ENCODE measurements at regions of chr7 and their contacts with region 1.

Region 1: GRCh38 chr7:128356546-128357216 is 4.8 kb downstream of the PRRT4 start:
- DNase-seq: no peak
- H3K4me3 ChIP-seq: no peak overlapping the region
- H3K27ac ChIP-seq: no peak overlapping the region
- H3K4me1 ChIP-seq: peaks cover 3 to 21% (median 19%) of the 10 kb centered on the region in 4 experiments
- H3K27me3 ChIP-seq: peaks cover 3 to 42% (median 17%) of the 10 kb centered on the region in 5 experiments

Region 2: GRCh38 chr7:128104035-128104742 is 252.5 kb before region 1 on chr7:
- CTCF ChIA-PET with region 1: no interaction called
- POLR2A ChIA-PET with region 1: no interaction called
- DNase-seq: peak in 2 of 3 donors; percentile 54 to 65
- H3K4me3 ChIP-seq: peak overlapping the region in 6 of 7 experiments; percentile 2 to 53 (median 32)
- H3K27ac ChIP-seq: no peak overlapping the region
- H3K4me1 ChIP-seq: peaks cover 9 to 34% (median 24%) of the 10 kb centered on the region in 4 experiments
- H3K27me3 ChIP-seq: peaks cover 0 to 61% (median 17%) of the 10 kb centered on the region in 5 experiments

Region 3: GRCh38 chr7:128221929-128222403 is 134.7 kb before region 1 on chr7:
- CTCF ChIA-PET with region 1: no interaction called
- POLR2A ChIA-PET with region 1: no interaction called
- DNase-seq: peak; percentile 22 to 73 (median 67)
- H3K4me3 ChIP-seq: no peak overlapping the region
- H3K27ac ChIP-seq: no peak overlapping the region
- H3K4me1 ChIP-seq: peaks cover 2 to 17% (median 5%) of the 10 kb centered on the region in 4 experiments
- H3K27me3 ChIP-seq: peaks cover 0 to 2% (median 0%) of the 10 kb centered on the region in 5 experiments

Region 4: GRCh38 chr7:128259131-128259800 is 97.4 kb before region 1 on chr7:
- CTCF ChIA-PET with region 1: no interaction called
- POLR2A ChIA-PET with region 1: no interaction called
- DNase-seq: peak in 1 of 3 donors; percentile 15
- H3K4me3 ChIP-seq: no peak overlapping the region
- H3K27ac ChIP-seq: no peak overlapping the region
- H3K4me1 ChIP-seq: no peaks in the 10 kb centered on the region
- H3K27me3 ChIP-seq: no peaks in the 10 kb centered on the region

Region 5: GRCh38 chr7:128373606-128374005 is 16.9 kb after region 1 on chr7:
- CTCF ChIA-PET with region 1: interaction called, 1,829 read pairs
- POLR2A ChIA-PET with region 1: interaction called, 4 read pairs
- DNase-seq: no peak
- H3K4me3 ChIP-seq: no peak overlapping the region
- H3K27ac ChIP-seq: no peak overlapping the region
- H3K4me1 ChIP-seq: peaks cover 0 to under 1% (median under 1%) of the 10 kb centered on the region in 4 experiments
- H3K27me3 ChIP-seq: no peaks in the 10 kb centered on the region

Region 6: DNA sequence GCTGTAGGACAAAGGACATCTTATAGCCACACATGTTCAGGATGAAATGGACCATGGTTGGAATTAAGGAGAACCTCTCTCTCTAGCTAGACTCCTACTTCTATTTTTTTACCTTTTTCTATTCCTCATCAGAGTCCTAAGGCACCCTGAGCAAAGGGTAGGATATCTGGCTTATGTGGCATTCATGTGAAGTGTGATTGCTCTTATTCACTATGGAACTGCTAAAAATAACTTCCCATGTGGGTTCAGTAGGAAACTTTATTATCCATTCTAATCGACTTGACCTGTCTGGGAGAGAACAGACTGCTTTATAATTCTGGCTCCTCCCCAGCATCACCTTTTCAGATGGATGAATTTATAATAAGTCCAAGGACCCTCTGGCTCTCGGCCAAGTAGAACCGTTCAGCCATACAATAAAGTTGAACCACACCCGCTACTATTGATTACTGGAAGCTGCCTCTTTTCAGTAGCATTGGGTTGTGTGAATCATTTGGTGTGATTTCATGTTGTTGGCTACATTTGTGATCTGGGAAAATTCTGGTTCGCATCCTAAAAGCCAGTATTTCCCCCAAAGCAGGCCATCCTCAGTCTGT is 1372.3 kb after region 1 on chr7:
- CTCF ChIA-PET with region 1: no interaction called
- POLR2A ChIA-PET with region 1: no interaction called
- DNase-seq: no peak
- H3K4me3 ChIP-seq: no peak overlapping the region
- H3K27ac ChIP-seq: no peak overlapping the region
- H3K4me1 ChIP-seq: no peaks in the 10 kb centered on the region
- H3K27me3 ChIP-seq: no peaks in the 10 kb centered on the region

Measured in common myeloid progenitor, CD34-positive (primary cell).